CD8-positive, alpha-beta memory T cell (primary cell): ENCODE measurements at regions of chr1 and their contacts with region 1.

Region 1: DNA sequence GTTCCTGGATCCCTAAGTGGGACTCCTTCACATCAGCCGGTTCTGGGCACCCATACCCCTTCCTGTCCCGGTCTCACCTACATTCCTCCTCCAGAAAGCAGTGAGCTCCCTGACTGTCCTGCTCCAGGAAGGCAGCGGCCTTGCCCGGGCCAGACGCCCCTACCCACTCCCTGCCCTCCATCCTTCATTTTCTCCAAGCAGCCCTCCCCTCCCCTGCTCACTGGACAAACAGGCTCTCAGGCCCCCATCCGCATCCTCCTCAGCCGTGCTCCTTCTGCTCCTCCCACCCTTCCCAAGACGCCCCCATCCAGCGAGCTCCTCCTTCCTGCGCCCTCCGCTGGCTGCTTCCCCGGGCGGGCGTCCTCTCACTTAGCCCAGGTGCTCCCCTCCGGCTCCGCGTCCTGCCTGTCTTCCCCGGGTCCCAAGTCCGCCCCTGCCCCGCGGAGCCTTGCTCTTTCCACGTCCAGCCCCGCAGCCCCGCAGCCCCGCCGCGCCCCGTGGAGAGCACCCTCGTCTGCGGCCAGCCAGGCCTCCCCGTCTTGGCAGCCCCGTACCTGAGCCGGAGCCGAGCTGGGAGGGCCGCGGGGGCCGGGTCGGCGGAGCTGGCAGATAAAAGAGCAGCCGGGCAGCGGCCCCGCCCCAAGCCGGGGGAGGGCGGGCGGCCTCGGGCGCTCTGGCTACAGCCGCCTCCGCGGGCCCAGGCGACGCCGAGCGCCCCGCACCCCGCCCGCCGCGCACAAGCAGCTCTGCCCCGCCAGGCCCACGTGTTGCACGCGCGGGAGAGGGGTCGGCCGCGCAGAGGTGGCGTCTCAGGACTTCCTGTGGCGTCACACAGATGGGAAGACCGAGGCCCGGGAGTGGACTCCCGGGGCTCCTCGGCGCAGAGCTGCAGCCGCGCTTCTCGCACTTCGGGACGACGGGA is at the start of gene PAQR7:
- DNase-seq: peak; percentile 43 to 71 (median 62)
- H3K4me3 ChIP-seq: peak within 1 kb of the TSS; percentile 50
- H3K4me3 Mint-ChIP-seq: peak within 1 kb of the TSS; percentile 81 to 93 (median 85)
- H3K27ac ChIP-seq: peak within 1 kb of the TSS; percentile 43
- H3K27ac Mint-ChIP-seq: peak within 1 kb of the TSS; percentile 31 to 96 (median 81)
- H3K4me1 ChIP-seq: peaks cover 11% of the 10 kb centered on the region
- H3K4me1 Mint-ChIP-seq: peaks cover 5 to 10% (median 8%) of the 10 kb centered on the region in 3 donors
- H3K27me3 ChIP-seq: no peaks in the 10 kb centered on the region
- H3K27me3 Mint-ChIP-seq: peaks cover 0 to 5% of the 10 kb centered on the region in 2 donors
- total RNA-seq, gene PAQR7: 7.9 to 8.1 TPM

Region 2: GRCh38 chr1:25538191-25538761 is 336.9 kb before region 1 on chr1:
- CTCF ChIA-PET with region 1: no interaction called
- POLR2A ChIA-PET with region 1: no interaction called
- DNase-seq: no peak
- H3K4me3 ChIP-seq: no peak overlapping the region
- H3K4me3 Mint-ChIP-seq: no peak overlapping the region
- H3K27ac ChIP-seq: no peak overlapping the region
- H3K27ac Mint-ChIP-seq: peak overlapping the region in 2 of 8 donors; percentile 1 to 41
- H3K4me1 ChIP-seq: no peaks in the 10 kb centered on the region
- H3K4me1 Mint-ChIP-seq: peaks cover 0 to 7% (median 5%) of the 10 kb centered on the region in 3 donors
- H3K27me3 ChIP-seq: no peaks in the 10 kb centered on the region
- H3K27me3 Mint-ChIP-seq: no peaks in the 10 kb centered on the region

Region 3: GRCh38 chr1:25819576-25820246 is 55.5 kb before region 1 on chr1 and contains the start of gene MTFR1L:
- CTCF ChIA-PET with region 1: interaction called, 3 read pairs
- POLR2A ChIA-PET with region 1: interaction called, 17 read pairs
- DNase-seq: peak; percentile 90 to 95 (median 92)
- H3K4me3 ChIP-seq: peak within 1 kb of the TSS; percentile 71
- H3K4me3 Mint-ChIP-seq: peak within 1 kb of the TSS; percentile 92 to 98 (median 94)
- H3K27ac ChIP-seq: peak within 1 kb of the TSS; percentile 90
- H3K27ac Mint-ChIP-seq: peak within 1 kb of the TSS; percentile 83 to 99 (median 96)
- H3K4me1 ChIP-seq: peaks cover 37% of the 10 kb centered on the region
- H3K4me1 Mint-ChIP-seq: peaks cover 30 to 40% (median 35%) of the 10 kb centered on the region in 3 donors
- H3K27me3 ChIP-seq: no peaks in the 10 kb centered on the region
- H3K27me3 Mint-ChIP-seq: peaks cover 0 to 4% of the 10 kb centered on the region in 2 donors
- total RNA-seq, gene MTFR1L: 30.2 to 33.5 TPM

Region 4: GRCh38 chr1:27473755-27474154 is 1598.6 kb after region 1 on chr1:
- CTCF ChIA-PET with region 1: no interaction called
- POLR2A ChIA-PET with region 1: interaction called, 16 read pairs
- DNase-seq: peak in 1 of 5 donors; percentile 28
- H3K4me3 ChIP-seq: no peak overlapping the region
- H3K4me3 Mint-ChIP-seq: peak overlapping the region in 6 of 7 donors; percentile 29 to 61 (median 46)
- H3K27ac ChIP-seq: no peak overlapping the region
- H3K27ac Mint-ChIP-seq: peak overlapping the region in 7 of 8 donors; percentile 35 to 90 (median 47)
- H3K4me1 ChIP-seq: peaks cover 64% of the 10 kb centered on the region
- H3K4me1 Mint-ChIP-seq: peaks cover 66 to 86% (median 81%) of the 10 kb centered on the region in 3 donors
- H3K27me3 ChIP-seq: no peaks in the 10 kb centered on the region
- H3K27me3 Mint-ChIP-seq: peaks cover 0 to 1% of the 10 kb centered on the region in 2 donors